Activated naive CD4-positive, alpha-beta T cell treated with anti-CD3 and anti-CD28 coated beads for 36 hours (primary cell): ENCODE measurements at regions of chr12 and their contacts with region 1.

Region 1: DNA sequence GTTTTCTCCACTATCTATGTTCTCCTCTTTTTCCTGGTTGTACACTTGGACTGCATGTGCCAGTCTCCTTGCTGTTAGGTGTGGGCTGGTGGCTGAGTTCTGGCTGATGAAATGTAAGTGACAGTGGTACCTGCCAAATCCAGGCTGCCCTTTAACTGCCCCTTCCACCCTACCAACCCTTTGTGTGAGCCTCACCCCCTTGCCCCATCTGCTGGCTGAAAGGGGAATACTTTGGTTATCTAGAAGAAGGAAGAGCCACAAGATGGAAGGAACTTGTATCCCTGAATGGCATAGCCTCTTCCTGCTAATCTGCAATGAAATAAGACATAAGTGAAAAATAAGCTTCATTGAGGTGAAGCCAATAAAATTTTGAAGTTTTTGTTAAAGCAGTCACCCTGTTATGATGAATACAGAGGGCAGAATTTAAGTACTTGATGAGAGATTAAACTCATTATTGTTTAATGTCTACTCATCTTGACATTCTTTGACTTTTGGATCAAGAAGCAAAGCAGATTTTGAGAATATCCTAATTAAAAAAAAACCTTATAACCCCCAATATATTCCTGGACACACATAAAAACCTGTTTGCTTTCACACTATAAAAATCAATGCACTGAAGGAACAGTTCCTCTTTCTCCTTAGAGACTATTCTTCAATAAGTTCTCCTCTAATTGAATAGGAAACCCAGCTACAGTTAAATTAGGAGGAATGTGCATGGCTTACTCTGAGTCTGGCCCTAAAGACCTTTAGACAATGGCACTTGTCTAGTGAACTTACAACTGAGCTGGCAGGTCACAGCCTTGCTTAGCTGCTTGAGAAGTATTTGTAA is 262.6 kb upstream of the BTG1 start:
- DNase-seq: peak; percentile 79
- H3K4me3 Mint-ChIP-seq: no peak overlapping the region
- H3K27ac Mint-ChIP-seq: peak overlapping the region; percentile 71
- H3K4me1 Mint-ChIP-seq: peaks cover 64% of the 10 kb centered on the region
- H3K27me3 Mint-ChIP-seq: no peaks in the 10 kb centered on the region

Region 2: GRCh38 chr12:91551927-91552326 is 856.4 kb before region 1 on chr12:
- CTCF ChIA-PET with region 1: no interaction called
- intact Hi-C with region 1: no loop called
- DNase-seq: no peak
- H3K4me3 Mint-ChIP-seq: no peak overlapping the region
- H3K27ac Mint-ChIP-seq: no peak overlapping the region
- H3K4me1 Mint-ChIP-seq: peaks cover 2% of the 10 kb centered on the region
- H3K27me3 Mint-ChIP-seq: peaks cover 2% of the 10 kb centered on the region

Region 3: GRCh38 chr12:91577586-91578539 is 830.4 kb before region 1 on chr12:
- CTCF ChIA-PET with region 1: no interaction called
- intact Hi-C with region 1: loop called (anchors 5 kb)
- DNase-seq: no peak
- H3K4me3 Mint-ChIP-seq: peak overlapping the region; percentile 71
- H3K27ac Mint-ChIP-seq: peak overlapping the region; percentile 61
- H3K4me1 Mint-ChIP-seq: peaks cover 19% of the 10 kb centered on the region
- H3K27me3 Mint-ChIP-seq: no peaks in the 10 kb centered on the region

Region 4: GRCh38 chr12:91991399-91992187 is 416.7 kb before region 1 on chr12:
- CTCF ChIA-PET with region 1: no interaction called
- intact Hi-C with region 1: loop called (anchors 5 kb)
- DNase-seq: no peak
- H3K4me3 Mint-ChIP-seq: no peak overlapping the region
- H3K27ac Mint-ChIP-seq: no peak overlapping the region
- H3K4me1 Mint-ChIP-seq: peaks cover 61% of the 10 kb centered on the region
- H3K27me3 Mint-ChIP-seq: no peaks in the 10 kb centered on the region

Region 5: GRCh38 chr12:92145731-92146496 is 262.4 kb before region 1 on chr12 and contains the start of gene BTG1:
- CTCF ChIA-PET with region 1: interaction called, 4 read pairs
- intact Hi-C with region 1: loop called (anchors 1 kb)
- DNase-seq: peak; percentile 100
- H3K4me3 Mint-ChIP-seq: peak within 1 kb of the TSS; percentile 100
- H3K27ac Mint-ChIP-seq: peak within 1 kb of the TSS; percentile 100
- H3K4me1 Mint-ChIP-seq: peaks cover 27% of the 10 kb centered on the region
- H3K27me3 Mint-ChIP-seq: no peaks in the 10 kb centered on the region
- total RNA-seq, gene BTG1: 218 to 223 TPM

Region 6: GRCh38 chr12:92363295-92364146 is 44.8 kb before region 1 on chr12:
- CTCF ChIA-PET with region 1: interaction called, 14 read pairs
- intact Hi-C with region 1: no loop called
- DNase-seq: peak; percentile 56
- H3K4me3 Mint-ChIP-seq: peak overlapping the region; percentile 81
- H3K27ac Mint-ChIP-seq: peak overlapping the region; percentile 84
- H3K4me1 Mint-ChIP-seq: peaks cover 66% of the 10 kb centered on the region
- H3K27me3 Mint-ChIP-seq: no peaks in the 10 kb centered on the region

Region 7: GRCh38 chr12:92457458-92458180 is 49.3 kb after region 1 on chr12:
- CTCF ChIA-PET with region 1: no interaction called
- intact Hi-C with region 1: no loop called
- DNase-seq: no peak
- H3K4me3 Mint-ChIP-seq: no peak overlapping the region
- H3K27ac Mint-ChIP-seq: no peak overlapping the region
- H3K4me1 Mint-ChIP-seq: peaks cover 30% of the 10 kb centered on the region
- H3K27me3 Mint-ChIP-seq: no peaks in the 10 kb centered on the region

Region 8: GRCh38 chr12:92539113-92539749 is 130.9 kb after region 1 on chr12:
- CTCF ChIA-PET with region 1: no interaction called
- intact Hi-C with region 1: loop called (anchors 1 kb)
- DNase-seq: peak; percentile 65
- H3K4me3 Mint-ChIP-seq: no peak overlapping the region
- H3K27ac Mint-ChIP-seq: peak overlapping the region; percentile 97
- H3K4me1 Mint-ChIP-seq: peaks cover 56% of the 10 kb centered on the region
- H3K27me3 Mint-ChIP-seq: no peaks in the 10 kb centered on the region

Region 9: DNA sequence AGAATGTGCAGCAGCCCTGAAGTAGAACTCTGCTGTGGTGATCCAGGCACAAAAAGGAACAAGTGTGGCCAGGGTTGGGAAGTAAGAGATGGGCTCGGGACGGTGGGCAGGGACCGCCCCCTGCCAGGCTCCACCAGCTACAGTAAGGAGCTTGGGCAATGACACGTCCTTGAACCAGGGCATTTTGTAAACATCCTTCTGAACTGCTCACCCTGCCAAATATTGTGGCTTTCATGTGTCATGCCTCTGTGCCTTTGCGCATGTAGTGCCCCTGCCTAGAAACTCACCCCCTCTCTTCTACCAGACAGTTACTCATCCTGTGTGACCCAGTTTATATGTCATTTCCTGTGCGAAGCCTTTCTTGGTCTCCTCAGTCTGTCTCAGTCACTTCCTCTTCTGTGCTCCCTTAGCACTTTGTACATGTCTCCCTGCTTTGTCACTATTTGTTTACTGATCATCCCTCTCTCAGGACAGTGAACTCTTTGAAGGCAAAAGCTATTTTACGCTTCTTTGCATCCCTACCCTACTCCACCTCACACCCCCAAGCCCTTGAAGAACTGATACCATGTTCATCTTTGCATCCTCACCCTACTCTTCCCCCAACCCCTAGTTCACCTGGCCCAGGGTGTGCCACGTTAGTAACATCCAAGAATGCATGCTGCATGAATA is 185.6 kb after region 1 on chr12:
- CTCF ChIA-PET with region 1: interaction called, 3 read pairs
- intact Hi-C with region 1: loop called (anchors 1 kb)
- DNase-seq: peak; percentile 87
- H3K4me3 Mint-ChIP-seq: peak overlapping the region; percentile 55
- H3K27ac Mint-ChIP-seq: peak overlapping the region; percentile 96
- H3K4me1 Mint-ChIP-seq: peaks cover 78% of the 10 kb centered on the region
- H3K27me3 Mint-ChIP-seq: no peaks in the 10 kb centered on the region